ENCODE measurements at regions of chr20 and their contacts with region 1.

Region 1: GRCh38 chr20:34579191-34579978 is 20.9 kb downstream of the MAP1LC3A start:
- DNase-seq: peak; percentile 88
- H3K4me3 Mint-ChIP-seq: peak overlapping the region; percentile 11
- H3K27ac Mint-ChIP-seq: no peak overlapping the region
- H3K4me1 Mint-ChIP-seq: no peaks in the 10 kb centered on the region
- H3K27me3 Mint-ChIP-seq: no peaks in the 10 kb centered on the region
- CTCF ChIP-seq: peak; percentile 87

Region 2: DNA sequence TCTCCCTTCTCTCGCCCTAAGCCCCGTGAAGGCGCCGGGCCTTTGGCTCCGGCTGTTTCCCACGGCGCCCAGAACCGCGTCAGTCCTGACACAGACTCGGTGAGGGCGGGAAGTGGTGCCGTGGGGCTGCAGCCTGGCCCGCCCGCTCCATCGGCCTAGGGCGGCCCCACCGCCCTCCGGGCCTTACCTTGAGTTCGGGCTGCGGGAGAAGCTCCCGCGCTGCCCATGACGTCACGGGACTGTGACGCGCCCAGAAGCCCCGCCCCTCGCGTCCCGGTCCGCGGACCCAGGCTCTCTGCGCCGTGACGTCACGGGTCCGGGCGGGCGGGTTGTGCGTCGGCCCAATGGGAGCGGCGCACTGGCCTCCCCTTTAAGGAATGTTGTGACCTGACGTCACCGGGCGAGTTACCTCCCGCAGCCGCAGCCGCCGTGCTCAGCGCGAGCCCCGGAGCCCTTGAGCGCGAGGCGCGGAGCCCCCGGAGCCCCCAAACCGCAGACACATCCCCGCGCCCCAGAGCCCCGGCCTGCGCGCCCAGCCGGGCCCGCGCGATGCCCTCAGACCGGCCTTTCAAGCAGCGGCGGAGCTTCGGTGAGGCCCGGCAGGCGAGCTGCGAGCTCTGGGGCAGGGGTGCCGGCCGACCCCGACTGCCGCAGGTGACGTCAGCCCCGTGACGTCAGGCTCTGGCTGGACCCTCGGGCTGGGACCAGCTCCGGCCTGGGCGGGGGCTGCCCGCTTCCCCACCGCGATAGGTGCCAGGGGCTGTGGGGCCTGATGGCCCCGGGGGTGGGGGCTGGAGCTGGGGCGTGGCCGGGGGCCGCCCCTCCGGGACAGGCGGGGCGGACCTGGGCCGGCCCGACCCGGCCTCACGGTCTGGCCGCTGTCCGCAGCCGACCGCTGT is 20.8 kb before region 1 on chr20 and contains the start of gene MAP1LC3A:
- CTCF ChIA-PET with region 1: interaction called, 15 read pairs
- POLR2A ChIA-PET with region 1: no interaction called
- intact Hi-C with region 1: no loop called
- DNase-seq: peak; percentile 79
- H3K4me3 Mint-ChIP-seq: peak within 1 kb of the TSS; percentile 91
- H3K27ac Mint-ChIP-seq: peak within 1 kb of the TSS; percentile 85
- H3K4me1 Mint-ChIP-seq: peaks cover 21% of the 10 kb centered on the region
- H3K27me3 Mint-ChIP-seq: no peaks in the 10 kb centered on the region
- CTCF ChIP-seq: no peak
- total RNA-seq, gene MAP1LC3A: 10.5 and 10.7 TPM in 2 replicates

Region 3: GRCh38 chr20:34564833-34565232 is 14.6 kb before region 1 on chr20:
- CTCF ChIA-PET with region 1: interaction called, 17 read pairs
- POLR2A ChIA-PET with region 1: interaction called, 3 read pairs
- intact Hi-C with region 1: no loop called
- DNase-seq: no peak
- H3K4me3 Mint-ChIP-seq: no peak overlapping the region
- H3K27ac Mint-ChIP-seq: no peak overlapping the region
- H3K4me1 Mint-ChIP-seq: no peaks in the 10 kb centered on the region
- H3K27me3 Mint-ChIP-seq: no peaks in the 10 kb centered on the region
- CTCF ChIP-seq: no peak

Region 4: DNA sequence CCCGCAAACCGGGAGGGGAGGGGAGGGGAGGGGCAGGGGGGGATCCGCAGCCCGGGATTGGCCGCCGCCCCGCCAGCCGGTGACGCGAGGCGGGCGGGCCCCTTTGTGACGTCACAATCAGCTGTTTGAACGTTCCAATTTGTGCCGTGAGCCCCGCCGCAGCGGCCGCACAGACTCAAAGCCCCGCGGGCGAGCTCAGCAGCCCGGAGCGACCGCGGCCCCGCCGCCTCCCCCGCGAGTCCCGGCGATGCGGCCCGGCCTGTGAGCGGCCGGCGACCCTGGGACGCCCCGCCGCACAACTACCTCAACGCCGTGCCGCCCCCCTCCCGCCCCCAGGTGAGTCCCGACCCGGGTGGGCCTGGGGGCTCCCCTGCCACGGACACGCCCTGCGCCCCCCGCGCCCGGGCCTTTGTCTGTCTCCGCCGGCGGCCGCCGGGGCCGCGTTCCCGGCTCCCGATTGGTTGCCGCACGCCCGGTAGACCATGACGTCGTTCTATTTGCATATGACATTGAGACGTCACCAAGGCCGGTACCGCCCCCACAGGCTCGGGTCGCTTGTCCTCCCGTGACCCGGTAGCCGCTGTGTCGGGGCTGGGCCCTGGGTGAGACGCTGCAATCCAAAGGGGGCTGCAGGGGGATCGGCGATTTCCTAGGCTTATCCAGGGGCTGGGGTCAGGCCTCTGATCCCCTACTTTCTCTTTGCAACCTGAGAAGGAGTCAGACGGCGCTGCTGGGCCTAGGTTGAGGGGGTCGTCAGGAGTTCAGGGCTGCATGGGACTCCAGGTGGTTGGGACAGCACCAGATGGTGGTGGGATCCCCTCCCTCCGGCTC is 125.0 kb after region 1 on chr20 and contains the start of gene TP53INP2:
- CTCF ChIA-PET with region 1: interaction called, 27 read pairs
- POLR2A ChIA-PET with region 1: interaction called, 36 read pairs
- intact Hi-C with region 1: loop called (anchors 1 kb)
- DNase-seq: peak; percentile 76
- H3K4me3 Mint-ChIP-seq: peak within 1 kb of the TSS; percentile 95
- H3K27ac Mint-ChIP-seq: peak within 1 kb of the TSS; percentile 77
- H3K4me1 Mint-ChIP-seq: peaks cover 8% of the 10 kb centered on the region
- H3K27me3 Mint-ChIP-seq: no peaks in the 10 kb centered on the region
- CTCF ChIP-seq: no peak
- total RNA-seq, gene TP53INP2: 1.8 and 3.6 TPM in 2 replicates

Region 5: GRCh38 chr20:34753706-34754461 is 174.5 kb after region 1 on chr20:
- CTCF ChIA-PET with region 1: interaction called, 41 read pairs
- POLR2A ChIA-PET with region 1: interaction called, 3 read pairs
- intact Hi-C with region 1: no loop called
- DNase-seq: no peak
- H3K4me3 Mint-ChIP-seq: no peak overlapping the region
- H3K27ac Mint-ChIP-seq: no peak overlapping the region
- H3K4me1 Mint-ChIP-seq: no peaks in the 10 kb centered on the region
- H3K27me3 Mint-ChIP-seq: no peaks in the 10 kb centered on the region
- CTCF ChIP-seq: no peak

Region 6: DNA sequence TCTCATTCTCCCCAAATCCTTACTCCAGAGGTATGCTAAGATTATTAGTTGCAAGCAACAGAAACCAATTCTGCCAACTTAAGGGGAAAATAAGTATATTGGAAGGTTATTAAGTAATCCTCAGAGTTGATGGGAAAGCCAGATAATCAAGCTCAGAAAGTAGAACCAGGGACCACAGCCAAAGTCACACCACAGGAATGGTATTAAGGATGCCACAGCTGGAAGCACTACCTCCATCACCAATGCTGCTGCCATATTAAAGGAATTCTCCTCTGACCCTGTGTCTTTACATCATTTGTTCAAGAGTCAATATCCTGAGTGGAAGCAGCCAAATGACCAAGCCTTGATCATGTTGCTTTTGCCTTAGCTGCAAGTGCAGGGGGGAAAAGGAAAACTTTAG is 602.3 kb after region 1 on chr20:
- CTCF ChIA-PET with region 1: no interaction called
- POLR2A ChIA-PET with region 1: no interaction called
- intact Hi-C with region 1: no loop called
- DNase-seq: no peak
- H3K4me3 Mint-ChIP-seq: no peak overlapping the region
- H3K27ac Mint-ChIP-seq: no peak overlapping the region
- H3K4me1 Mint-ChIP-seq: no peaks in the 10 kb centered on the region
- H3K27me3 Mint-ChIP-seq: no peaks in the 10 kb centered on the region
- CTCF ChIP-seq: no peak